ENCODE measurements at regions of chr15 and their contacts with region 1.

Region 1: DNA sequence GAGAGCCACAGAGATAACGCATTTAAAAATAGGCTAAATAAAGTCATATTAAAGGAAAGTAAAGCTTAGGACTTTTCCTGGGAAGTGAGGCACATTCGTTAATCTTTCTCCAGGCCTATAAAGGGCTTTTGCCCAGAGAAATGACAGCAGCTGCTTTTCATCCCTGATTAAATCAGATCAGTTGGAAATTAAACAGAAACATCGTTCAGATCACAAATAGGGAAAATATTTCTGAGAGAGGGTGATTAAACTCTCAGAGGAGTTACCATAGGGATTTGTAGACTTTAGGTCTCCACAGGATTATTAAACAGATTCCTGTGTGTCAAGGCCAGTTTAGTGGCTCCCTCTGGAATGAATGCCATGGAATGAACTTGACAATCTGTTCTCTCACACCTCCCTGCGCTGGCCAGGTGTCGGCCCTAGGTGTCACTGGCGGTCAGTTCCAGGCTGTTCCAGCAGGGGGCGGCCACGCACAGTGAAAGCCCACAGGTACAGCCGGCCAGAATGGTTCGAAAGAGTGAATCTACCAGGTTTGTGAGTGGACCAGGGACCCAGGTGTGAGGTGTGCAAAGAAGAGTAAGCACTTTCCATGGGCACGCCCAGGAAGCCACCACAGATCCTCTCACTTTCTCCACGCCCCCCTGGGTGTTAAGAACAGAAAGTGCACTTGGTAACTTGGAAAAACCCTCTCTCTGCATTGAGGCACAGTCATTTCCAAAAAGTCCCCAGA is 253.0 kb upstream of the RASGRP1 start:
- DNase-seq: peak; percentile 50
- ATAC-seq: peak; percentile 99
- H3K4me3 ChIP-seq: no peak overlapping the region
- H3K27ac ChIP-seq: peak overlapping the region; percentile 34; the same call in 1 of the 2 replicates
- H3K4me1 ChIP-seq: peaks cover 7% of the 10 kb centered on the region
- H3K27me3 ChIP-seq: no peaks in the 10 kb centered on the region
- CTCF ChIP-seq: peak; percentile 98

Region 2: GRCh38 chr15:38699633-38700230 is 117.9 kb before region 1 on chr15:
- CTCF ChIA-PET with region 1: no interaction called
- POLR2A ChIA-PET with region 1: no interaction called
- in situ Hi-C with region 1: no loop called
- intact Hi-C with region 1: loop called (anchors 10 kb)
- DNase-seq: no peak
- ATAC-seq: peak; percentile 87
- H3K4me3 ChIP-seq: no peak overlapping the region
- H3K27ac ChIP-seq: no peak overlapping the region
- H3K4me1 ChIP-seq: no peaks in the 10 kb centered on the region; the same call in none of the 2 replicates
- H3K27me3 ChIP-seq: no peaks in the 10 kb centered on the region
- CTCF ChIP-seq: peak; percentile 92

Region 3: GRCh38 chr15:39028069-39028468 is 210.5 kb after region 1 on chr15:
- CTCF ChIA-PET with region 1: no interaction called
- POLR2A ChIA-PET with region 1: no interaction called
- in situ Hi-C with region 1: no loop called
- intact Hi-C with region 1: loop called (anchors 10 kb)
- DNase-seq: peak; percentile 12
- ATAC-seq: no peak
- H3K4me3 ChIP-seq: no peak overlapping the region
- H3K27ac ChIP-seq: no peak overlapping the region
- H3K4me1 ChIP-seq: no peaks in the 10 kb centered on the region
- H3K27me3 ChIP-seq: no peaks in the 10 kb centered on the region
- CTCF ChIP-seq: no peak

Region 4: DNA sequence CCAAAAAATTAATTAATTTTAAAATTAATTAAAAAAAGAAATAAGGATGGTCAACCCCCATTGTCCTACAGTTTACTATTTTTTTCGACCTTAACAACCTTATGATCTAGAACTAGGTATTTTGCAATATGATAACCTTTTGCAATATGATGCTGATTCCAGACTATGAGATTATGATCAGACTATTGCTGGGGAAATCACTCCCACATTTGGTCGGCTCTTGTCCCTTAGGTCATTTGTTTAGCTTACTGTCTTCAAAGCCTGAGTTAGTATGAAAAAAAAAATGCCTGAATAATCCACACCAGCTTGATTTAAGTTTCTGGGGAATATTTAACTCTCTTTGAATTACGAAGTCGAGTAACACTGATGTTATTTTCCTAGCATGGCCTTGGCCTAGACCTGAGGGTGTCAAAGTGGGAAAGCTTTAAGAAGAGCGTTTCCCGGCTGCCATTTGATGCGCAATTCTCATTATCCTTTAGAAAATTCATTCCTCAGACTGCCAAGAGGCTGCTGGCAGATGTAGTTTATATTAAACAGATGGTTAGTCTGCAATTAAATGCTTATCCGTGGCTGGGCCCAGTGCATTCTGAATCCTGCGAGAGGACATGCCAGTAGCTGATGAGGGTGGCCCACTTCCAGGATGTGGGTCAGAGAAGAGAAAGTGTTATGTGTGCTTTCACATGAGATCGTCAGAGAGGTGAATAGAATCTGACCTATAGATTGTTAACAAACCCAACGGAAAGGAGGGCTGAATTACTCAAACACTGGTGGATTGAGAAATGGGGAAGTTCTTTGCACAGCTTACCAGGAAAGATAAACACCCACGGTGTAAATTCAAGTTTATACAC is 267.3 kb after region 1 on chr15:
- CTCF ChIA-PET with region 1: no interaction called
- POLR2A ChIA-PET with region 1: no interaction called
- in situ Hi-C with region 1: no loop called
- intact Hi-C with region 1: loop called (anchors 10 kb)
- DNase-seq: no peak
- ATAC-seq: no peak
- H3K4me3 ChIP-seq: no peak overlapping the region
- H3K27ac ChIP-seq: no peak overlapping the region
- H3K4me1 ChIP-seq: no peaks in the 10 kb centered on the region
- H3K27me3 ChIP-seq: no peaks in the 10 kb centered on the region
- CTCF ChIP-seq: no peak

Region 5: GRCh38 chr15:39580117-39580484 is 762.5 kb after region 1 on chr15:
- CTCF ChIA-PET with region 1: no interaction called
- POLR2A ChIA-PET with region 1: no interaction called
- in situ Hi-C with region 1: no loop called
- intact Hi-C with region 1: loop called (anchors 5 kb)
- DNase-seq: peak; percentile 28
- ATAC-seq: peak; percentile 82
- H3K4me3 ChIP-seq: peak overlapping the region; percentile 50 to 53
- H3K27ac ChIP-seq: no peak overlapping the region
- H3K4me1 ChIP-seq: no peaks in the 10 kb centered on the region
- H3K27me3 ChIP-seq: peaks cover 4% of the 10 kb centered on the region
- CTCF ChIP-seq: peak; percentile 97